Caco-2 (cell line): ENCODE measurements at regions of chr2 and their contacts with region 1.

Region 1: DNA sequence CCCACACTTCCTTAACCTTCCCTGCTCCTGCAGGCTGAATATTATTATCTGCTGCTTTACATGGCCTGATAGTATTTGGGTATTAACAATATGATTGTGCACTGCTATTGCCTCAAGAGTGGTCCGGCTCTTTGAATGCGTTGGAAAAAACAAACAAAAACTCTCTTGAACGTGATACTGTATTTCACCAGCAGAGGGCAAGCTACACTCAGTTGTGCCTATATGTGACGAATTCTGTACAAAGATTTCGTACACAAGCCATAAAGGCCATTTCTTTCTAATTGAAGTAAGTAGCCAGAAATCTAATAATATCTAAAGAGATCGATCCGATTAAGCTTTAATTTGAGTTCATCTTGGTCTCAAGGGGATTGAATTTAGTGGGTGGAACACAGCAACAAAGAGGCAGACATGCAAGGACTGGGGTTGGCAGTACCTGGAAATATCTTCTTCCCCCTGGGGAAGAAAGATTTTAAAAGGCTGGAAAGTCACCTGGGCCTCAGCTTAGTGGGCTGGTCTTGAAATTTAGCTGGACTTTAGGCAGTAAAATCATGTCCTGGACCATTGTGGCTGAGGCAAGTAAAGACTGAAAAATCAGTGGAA is 49.3 kb upstream of the RAB6D start:
- DNase-seq: peak in 1 of 2 experiments; percentile 67
- H3K4me3 ChIP-seq: no peak overlapping the region
- H3K4me3 Mint-ChIP-seq: no peak overlapping the region
- H3K27ac Mint-ChIP-seq: no peak overlapping the region
- H3K4me1 ChIP-seq: no peaks in the 10 kb centered on the region
- H3K4me1 Mint-ChIP-seq: no peaks in the 10 kb centered on the region
- H3K27me3 ChIP-seq: no peaks in the 10 kb centered on the region
- H3K27me3 Mint-ChIP-seq: peaks cover 18% of the 10 kb centered on the region
- CTCF ChIP-seq: peak; percentile 71 to 82

Region 2: DNA sequence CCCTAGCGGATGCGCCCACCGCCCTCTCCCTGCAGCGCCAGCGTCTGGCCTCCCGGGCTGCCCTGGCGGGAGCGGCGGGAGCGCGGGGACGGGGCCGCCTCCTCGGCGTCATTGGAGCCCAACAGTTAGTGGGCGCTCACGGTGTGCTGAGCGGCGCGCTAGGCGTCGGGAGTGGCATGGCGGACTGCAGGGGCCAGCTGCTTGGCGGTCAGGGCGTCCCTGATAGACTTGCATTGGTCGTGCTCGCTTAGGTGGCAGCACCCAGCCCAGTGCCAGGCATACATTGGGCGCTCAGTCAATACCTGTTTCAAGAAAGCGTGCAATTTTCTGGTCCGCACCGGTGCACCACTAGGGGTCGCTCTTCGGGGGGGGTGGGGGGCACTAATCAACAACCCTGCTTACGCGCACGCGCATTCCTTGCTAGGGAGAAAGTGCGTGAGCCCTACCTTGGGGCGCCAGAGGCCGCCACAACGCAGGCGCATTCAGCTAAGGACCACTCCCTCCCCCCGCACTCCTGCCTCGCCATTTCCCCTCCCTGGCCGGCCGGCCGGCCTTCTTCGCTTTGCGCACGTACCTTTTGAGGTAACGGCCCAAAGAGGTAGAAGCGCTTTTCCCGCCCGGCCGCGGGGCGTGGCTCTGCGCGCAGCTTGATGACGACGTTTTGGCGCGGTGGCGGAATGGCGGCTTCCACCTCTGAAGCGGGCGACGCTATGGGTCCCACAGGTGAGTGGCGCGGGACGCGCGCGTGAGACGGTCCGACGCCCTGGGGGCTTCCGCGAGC is 79.4 kb after region 1 on chr2:
- CTCF ChIA-PET with region 1: interaction called, 4 read pairs
- POLR2A ChIA-PET with region 1: no interaction called
- intact Hi-C with region 1: loop called (anchors 1 kb)
- DNase-seq: peak; percentile 97 to 98
- H3K4me3 ChIP-seq: peak overlapping the region; percentile 96
- H3K4me3 Mint-ChIP-seq: peak overlapping the region; percentile 95
- H3K27ac Mint-ChIP-seq: peak overlapping the region; percentile 98
- H3K4me1 ChIP-seq: no peaks in the 10 kb centered on the region
- H3K4me1 Mint-ChIP-seq: no peaks in the 10 kb centered on the region
- H3K27me3 ChIP-seq: no peaks in the 10 kb centered on the region
- H3K27me3 Mint-ChIP-seq: no peaks in the 10 kb centered on the region
- CTCF ChIP-seq: peak; percentile 90 to 91

Region 3: DNA sequence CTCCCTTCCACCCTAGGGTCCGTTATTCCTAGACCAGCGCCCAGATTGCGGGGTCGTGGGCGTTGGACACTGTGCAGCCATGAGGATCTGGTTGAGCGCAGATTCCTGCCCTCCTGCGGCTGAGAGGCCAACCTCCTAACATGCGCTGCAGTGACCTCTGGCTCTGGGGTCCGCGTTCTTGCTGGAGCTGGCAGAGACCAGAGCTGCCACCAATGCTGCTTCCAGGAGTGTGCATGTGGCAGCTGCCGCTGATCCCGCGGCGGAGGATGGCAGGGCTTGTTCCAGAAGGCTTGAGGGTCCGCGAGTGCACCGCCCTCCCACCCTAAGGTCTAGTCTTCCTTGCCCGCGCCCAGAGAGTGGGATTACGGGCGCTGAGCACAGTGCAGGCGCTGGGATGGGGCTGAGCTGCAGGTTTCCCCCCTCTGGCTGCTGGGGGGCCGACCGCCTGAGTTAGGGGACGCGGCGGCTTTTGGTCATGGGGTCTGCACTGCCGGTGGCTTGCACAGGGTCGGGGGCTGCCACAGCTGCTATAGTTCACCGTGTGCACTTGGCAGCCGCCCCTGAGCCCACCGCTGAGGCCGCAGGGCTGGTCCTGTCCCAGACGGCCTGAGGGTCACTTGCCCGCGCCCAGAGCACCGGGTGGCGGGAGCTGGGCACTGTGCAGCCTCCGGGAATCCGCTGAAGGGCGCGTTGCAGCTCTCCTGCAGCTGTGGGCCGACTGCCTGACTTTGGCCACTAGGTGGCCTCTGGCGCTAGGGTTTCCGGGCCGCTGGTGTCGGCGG is 260.3 kb after region 1 on chr2:
- CTCF ChIA-PET with region 1: interaction called, 18 read pairs
- POLR2A ChIA-PET with region 1: no interaction called
- intact Hi-C with region 1: loop called (anchors 1 kb)
- DNase-seq: peak; percentile 81 to 84
- H3K4me3 ChIP-seq: peak overlapping the region; percentile 39
- H3K4me3 Mint-ChIP-seq: peak overlapping the region; percentile 59
- H3K27ac Mint-ChIP-seq: no peak overlapping the region
- H3K4me1 ChIP-seq: no peaks in the 10 kb centered on the region
- H3K4me1 Mint-ChIP-seq: no peaks in the 10 kb centered on the region
- H3K27me3 ChIP-seq: no peaks in the 10 kb centered on the region; the same call in 1 of the 2 replicates
- H3K27me3 Mint-ChIP-seq: peaks cover 10% of the 10 kb centered on the region
- CTCF ChIP-seq: peak; percentile 87 to 91